GM10248 (cell line): ENCODE measurements at regions of chr1 and their contacts with region 1.

Region 1: GRCh38 chr1:92994105-92994712 is 32.9 kb upstream of the DIPK1A start:
- DNase-seq: peak; percentile 65
- CTCF ChIP-seq: peak; percentile 77

Region 2: GRCh38 chr1:92831762-92832536 is 162.3 kb before region 1 on chr1 and contains the start of gene RPL5:
- CTCF ChIA-PET with region 1: interaction called, 16 read pairs
- POLR2A ChIA-PET with region 1: no interaction called
- DNase-seq: peak; percentile 98
- CTCF ChIP-seq: peak; percentile 97

Region 3: DNA sequence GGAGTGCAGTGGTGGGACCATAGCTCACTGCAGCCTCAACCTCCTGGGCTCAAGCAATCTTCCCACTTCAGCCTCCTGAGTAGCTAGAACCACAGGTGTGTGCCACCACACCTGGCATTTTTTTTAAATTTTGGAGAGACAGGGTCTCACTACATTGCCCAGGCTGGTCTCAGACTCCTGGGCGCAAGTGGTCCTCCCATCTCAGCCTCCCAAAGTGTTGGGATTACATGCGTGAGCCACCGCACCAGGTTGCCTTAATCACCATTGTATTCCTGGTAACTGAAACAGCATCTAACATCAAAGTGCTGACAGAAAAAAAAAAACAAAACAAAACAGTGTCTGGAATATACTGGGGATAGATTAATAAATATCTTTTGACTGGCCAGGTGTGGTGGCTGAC is 144.2 kb before region 1 on chr1:
- CTCF ChIA-PET with region 1: interaction called, 11 read pairs
- POLR2A ChIA-PET with region 1: interaction called, 3 read pairs
- DNase-seq: no peak
- CTCF ChIP-seq: no peak

Region 4: DNA sequence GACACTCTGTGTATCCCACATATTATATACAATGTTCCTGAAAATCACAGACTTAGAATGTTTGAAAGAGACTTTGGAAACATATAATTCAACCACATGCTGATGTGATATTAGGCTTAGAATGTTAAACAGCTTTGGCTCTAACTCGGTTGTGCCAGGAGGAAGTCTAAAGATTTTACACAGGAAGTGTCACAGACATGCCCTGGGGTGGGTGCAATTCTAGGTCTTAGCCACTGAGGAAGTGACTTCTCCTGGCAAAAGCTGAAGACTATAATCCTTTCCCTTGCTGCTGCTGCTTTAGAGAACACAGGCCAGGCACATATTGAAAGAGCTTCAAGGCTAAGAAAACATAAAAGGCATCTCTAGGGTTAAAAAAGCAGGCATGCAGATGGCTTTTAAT is 111.4 kb before region 1 on chr1:
- CTCF ChIA-PET with region 1: interaction called, 17 read pairs
- POLR2A ChIA-PET with region 1: no interaction called
- DNase-seq: no peak
- CTCF ChIP-seq: no peak

Region 5: GRCh38 chr1:92960395-92961130 is 33.6 kb before region 1 on chr1:
- CTCF ChIA-PET with region 1: interaction called, 282 read pairs
- POLR2A ChIA-PET with region 1: no interaction called
- DNase-seq: peak; percentile 73
- CTCF ChIP-seq: peak; percentile 77

Region 6: DNA sequence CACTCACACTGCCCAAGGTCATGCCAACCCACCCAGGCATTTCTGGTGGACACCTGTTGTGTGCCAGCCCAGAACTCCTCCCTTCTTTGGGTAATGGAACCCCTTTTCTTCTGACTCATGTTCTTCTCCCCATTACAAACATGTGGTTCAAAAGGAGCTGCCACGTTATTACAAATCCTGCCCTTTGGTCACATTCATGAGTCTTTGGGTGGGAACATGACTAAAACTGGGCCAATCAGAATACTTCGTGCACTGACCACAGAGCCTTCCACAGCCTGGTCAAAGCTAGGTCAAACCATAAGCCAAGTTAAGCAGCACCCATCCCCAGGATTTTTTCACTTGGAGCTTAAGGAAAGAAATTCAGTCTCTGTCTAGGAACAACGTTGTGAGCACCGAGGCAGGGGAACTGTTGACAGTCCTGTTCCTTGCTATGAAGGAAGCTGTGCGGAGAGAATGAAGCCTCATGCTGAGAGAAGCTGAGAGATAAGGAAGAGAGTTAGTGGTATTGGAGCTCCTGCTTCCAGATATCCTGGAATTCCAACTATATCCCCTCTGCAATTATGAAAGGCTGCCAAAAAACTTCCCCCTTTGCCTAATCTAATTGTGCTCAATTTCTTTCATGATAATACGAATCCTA is 13.8 kb after region 1 on chr1:
- CTCF ChIA-PET with region 1: interaction called, 84 read pairs
- POLR2A ChIA-PET with region 1: no interaction called
- DNase-seq: no peak
- CTCF ChIP-seq: no peak